Lower leg skin (tissue), 4 donors: ENCODE measurements at regions of chr12 and their contacts with region 1.

Region 1: DNA sequence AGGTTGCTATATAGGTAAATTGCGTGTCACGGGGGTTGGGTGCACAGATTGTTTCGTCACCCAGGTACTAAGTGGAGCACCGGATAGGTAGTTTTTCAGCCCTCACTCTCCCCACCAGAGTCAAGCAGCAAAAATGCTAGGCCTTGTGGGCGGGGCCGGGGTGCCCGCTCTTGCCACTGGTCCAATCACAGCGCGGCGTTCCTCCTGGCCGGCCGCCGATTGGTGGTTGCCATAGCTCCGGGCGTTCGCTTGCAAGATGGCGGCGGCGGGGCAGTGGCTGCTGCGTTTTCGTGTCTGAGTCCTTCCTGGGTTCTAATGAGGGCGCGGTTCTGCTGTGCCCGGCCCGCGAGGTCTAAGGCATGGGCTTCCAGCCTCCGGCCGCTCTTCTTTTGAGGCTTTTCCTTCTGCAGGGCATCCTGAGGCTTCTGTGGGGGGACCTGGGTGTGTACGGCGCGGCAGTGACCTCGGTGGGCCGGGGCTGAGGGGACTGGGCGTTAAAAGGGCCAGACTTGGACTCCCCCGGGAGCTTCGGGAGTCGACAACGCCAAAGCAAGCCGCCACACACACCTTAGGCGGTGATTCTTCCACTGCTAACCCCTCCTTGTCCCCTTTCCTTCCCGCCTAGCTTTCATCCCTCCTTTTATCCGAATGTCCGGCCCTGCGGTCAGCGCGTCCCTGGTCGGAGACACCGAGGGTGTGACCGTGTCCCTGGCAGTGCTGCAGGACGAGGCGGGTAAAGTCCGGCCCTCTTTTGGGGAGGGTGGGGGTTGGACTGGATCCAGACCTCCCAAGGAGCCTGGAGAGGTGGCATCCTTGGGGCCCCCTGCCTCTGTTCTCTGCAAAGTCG is at the start of gene TCTN2:
- DNase-seq: peak; percentile 94 to 99
- H3K4me3 ChIP-seq: peak within 1 kb of the TSS; percentile 91
- CTCF ChIP-seq: no peak
- POLR2A ChIP-seq: no peak
- total RNA-seq, gene TCTN2: 9.2 to 14.6 (median 10.7) TPM

Region 2: DNA sequence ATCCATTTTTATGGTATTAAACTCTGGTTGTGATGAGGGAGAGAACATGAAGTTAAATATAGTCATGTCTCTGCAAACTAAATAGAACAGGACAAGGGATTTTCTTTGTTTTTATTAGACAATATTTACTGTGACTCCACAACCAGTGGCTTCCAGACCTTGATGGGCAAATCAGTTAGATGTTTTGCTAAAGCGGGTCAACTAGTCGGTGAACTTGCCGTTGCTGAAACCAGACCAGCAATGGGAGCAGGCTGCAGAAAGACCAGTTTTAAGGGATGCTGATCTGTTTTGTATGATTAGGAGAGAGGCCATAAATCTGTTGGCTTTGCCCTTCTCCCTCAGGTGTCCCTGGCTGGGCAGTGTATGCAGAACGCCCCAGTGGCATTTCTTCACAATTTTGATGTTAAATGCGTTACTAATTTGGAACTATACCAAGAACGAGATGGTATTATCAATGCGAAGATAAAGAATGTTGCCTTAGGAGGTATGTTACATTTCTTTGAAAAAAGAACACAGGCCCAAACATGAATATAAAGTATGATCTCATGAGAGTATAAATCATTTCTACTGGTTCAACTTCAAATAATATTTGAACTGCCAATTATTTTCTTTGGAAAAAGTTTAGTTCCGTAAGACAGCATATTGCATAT is 19.2 kb after region 1 on chr12:
- intact Hi-C with region 1: loop called (anchors 1 kb)
- DNase-seq: no peak
- H3K4me3 ChIP-seq: no peak overlapping the region
- CTCF ChIP-seq: no peak
- POLR2A ChIP-seq: no peak

Region 3: DNA sequence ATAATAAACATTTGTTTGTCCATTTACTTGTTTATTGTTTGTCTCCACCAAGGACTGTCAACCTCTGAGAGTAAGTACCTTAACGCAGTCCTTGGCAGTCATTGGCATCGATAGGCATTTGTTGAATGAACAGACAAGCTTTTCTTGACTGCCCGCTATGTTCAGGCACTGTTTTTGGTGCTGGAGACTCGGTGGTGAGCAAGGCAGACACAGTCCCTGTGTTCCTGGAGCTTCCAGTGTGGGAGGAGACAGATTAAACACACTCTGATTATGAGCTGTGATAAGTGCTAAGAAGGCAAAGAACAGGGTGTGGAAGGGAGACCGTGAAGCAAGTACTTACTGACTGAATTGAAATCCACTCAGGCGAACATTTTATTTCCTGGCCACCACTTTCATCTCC is 42.3 kb after region 1 on chr12:
- intact Hi-C with region 1: no loop called
- DNase-seq: no peak
- H3K4me3 ChIP-seq: no peak overlapping the region
- CTCF ChIP-seq: no peak
- POLR2A ChIP-seq: no peak